ENCODE measurements at regions of chr12 and their contacts with region 1.

Region 1: GRCh38 chr12:49967042-49967776 is 5.5 kb downstream of the AQP5 start:
- DNase-seq: peak; percentile 91
- CTCF ChIP-seq: peak; percentile 98

Region 2: DNA sequence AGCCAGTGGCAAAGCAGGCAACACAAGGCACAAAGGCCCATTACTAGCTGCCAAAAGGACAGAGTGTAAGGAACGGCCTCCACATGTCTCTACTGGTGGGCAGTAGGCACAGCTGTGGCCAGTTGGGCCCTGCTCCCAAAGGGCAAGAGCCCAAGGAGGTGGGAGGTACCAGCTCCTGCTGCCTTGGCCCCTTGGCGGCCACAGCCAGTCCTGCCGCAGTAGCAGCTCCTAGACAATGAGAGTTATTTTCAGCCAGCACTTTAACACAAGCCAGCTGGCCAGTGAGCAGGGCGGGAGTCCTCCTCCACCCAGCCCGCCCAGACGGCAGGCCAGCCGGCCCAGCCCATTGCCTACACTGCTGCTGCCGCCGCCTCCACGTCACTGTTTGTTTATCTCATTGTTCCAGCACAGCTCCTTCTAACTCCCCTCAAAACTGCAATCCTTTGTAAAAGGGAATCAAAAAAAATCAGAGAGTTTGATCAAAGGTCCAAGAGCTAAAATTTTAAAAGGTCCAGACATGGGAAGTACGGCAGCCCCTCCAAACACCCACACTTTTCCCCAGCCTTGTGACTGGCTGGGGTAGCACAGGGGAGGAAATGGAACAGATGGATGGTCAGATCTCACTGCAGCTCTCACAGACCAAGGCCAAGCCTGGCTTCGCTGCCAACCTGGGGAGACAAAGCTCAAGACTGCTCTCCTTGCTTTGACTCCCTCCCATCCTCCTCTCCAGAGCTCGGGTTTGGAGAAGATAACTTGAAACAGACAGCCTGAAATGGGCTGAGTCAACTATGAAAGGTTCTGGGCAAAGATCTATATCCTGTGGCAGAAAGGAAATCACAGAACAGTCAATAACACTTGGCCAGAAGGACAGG is 293.5 kb before region 1 on chr12:
- CTCF ChIA-PET with region 1: no interaction called
- POLR2A ChIA-PET with region 1: no interaction called
- DNase-seq: peak; percentile 36
- CTCF ChIP-seq: no peak

Region 3: GRCh38 chr12:49945394-49946080 is 21.7 kb before region 1 on chr12:
- CTCF ChIA-PET with region 1: interaction called, 56 read pairs
- POLR2A ChIA-PET with region 1: no interaction called
- DNase-seq: peak; percentile 92
- CTCF ChIP-seq: peak; percentile 90

Region 4: GRCh38 chr12:49990273-49990672 is 23.1 kb after region 1 on chr12:
- CTCF ChIA-PET with region 1: interaction called, 193 read pairs
- POLR2A ChIA-PET with region 1: no interaction called
- DNase-seq: no peak
- CTCF ChIP-seq: no peak

Region 5: GRCh38 chr12:50016501-50017475 is 49.6 kb after region 1 on chr12:
- CTCF ChIA-PET with region 1: interaction called, 18 read pairs
- POLR2A ChIA-PET with region 1: no interaction called
- DNase-seq: no peak
- CTCF ChIP-seq: no peak

Region 6: GRCh38 chr12:50055831-50056638 is 88.8 kb after region 1 on chr12:
- CTCF ChIA-PET with region 1: interaction called, 161 read pairs
- POLR2A ChIA-PET with region 1: no interaction called
- DNase-seq: peak; percentile 83
- CTCF ChIP-seq: peak; percentile 95

Region 7: DNA sequence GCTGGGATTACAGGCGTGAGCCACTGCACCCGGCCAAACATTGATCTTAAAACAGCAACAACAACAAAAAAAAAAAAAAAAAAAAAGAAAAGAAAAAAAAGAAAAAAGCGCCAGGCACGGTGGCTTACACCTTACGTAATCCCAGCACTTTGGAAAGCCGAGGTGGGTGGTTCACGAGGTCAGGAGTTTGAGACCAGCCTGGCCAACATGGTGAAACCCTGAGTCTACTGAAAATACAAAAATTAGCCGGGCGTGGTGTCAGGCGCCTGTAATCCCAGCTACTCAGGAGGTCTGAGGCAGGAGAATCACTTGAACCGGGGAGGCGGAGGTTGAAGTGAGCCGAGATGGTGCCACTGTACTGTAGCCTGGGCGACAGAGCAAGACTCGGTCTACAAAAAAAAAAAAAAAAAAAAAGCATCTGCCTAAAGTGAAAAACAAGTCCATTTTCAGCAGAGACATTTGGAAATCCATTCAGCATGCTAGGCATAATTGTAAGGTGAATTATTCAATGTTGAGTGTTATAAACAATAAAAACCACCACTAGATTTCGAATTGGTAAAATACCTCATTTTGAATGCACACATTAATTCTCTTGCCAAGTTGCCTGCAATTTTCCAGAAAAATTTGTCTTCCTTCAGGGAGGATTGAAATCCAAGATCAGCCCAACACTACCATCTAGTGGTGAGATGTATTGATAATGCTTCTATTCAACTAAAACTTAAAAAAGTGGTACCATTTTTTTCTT is 207.9 kb after region 1 on chr12:
- CTCF ChIA-PET with region 1: interaction called, 10 read pairs
- POLR2A ChIA-PET with region 1: no interaction called
- DNase-seq: peak; percentile 39
- CTCF ChIP-seq: peak; percentile 38